ENCODE measurements at regions of chr3 and their contacts with region 1.

Region 1: DNA sequence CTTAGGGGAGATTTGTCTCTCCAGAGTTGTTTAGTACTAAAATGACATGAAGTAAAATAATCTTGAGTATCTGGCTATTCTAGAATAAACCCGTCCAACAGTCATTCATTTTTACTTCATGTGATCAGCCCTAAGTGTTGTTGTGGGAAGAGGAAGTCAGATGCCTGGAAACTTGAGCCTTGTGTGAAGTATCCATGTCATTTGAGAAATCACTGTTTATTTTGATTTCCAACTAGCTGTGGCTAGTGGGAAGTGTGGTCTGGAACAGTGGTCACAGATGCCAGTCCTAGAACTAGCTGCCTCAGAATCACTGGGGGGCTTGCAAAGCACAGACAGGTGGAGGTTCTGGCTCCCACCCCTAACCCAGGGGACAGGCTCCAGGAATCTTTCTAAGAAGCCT is 77.7 kb upstream of the LIMD1 start:
- DNase-seq: no peak
- ATAC-seq: no peak

Region 2: DNA sequence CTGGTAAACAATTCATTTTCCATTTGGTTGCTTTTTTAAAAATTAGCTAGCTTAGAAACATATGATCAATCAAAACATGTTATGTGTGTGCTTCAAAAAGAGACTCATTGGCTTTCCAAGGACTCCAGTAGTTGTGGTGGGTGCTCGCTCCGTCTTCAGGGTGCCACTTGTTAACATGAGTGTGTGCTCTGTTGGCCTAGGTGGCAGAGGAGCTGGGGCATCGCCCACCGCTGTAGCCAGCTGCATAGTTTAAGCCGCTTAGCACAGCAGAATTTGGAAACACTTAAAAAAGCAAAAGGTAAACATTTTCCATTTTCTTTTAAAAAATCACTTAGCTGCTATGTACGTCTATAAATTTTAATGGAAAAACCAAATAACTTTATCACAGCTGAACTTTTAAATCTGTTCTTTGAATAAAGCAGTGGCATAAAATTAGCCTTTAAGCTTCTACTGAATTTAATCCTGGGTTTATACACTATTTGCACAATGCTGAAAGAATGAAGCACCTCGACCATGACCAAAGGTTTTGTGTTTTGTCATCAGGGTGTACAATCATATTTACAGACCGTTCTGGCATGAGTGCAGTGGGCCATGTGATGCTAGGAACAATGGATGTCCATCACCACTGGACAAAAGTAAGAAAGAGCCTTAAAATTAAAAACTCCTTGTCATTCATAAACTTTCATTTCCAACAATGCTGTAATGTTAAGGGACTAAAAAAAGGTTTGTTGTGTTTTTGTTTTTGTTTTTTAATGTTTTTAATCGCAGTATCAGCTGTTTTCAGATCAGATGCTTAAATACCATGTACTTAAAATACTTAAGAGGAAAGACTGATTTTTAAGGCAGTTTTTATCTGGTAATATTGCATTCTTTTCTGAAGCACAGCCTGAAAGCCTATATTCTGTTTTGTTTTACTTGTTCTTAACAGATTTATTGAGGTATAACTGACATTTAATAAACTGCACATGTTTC is 1120.3 kb before region 1 on chr3:
- intact Hi-C with region 1: no loop called
- DNase-seq: no peak
- ATAC-seq: no peak

Region 3: GRCh38 chr3:44976002-44976815 is 540.6 kb before region 1 on chr3 and contains the starts of genes EXOSC7 and ZDHHC3:
- intact Hi-C with region 1: no loop called
- DNase-seq: peak; percentile 91
- ATAC-seq: peak; percentile 97
- total RNA-seq, gene EXOSC7: 36.9 TPM
- total RNA-seq, gene ZDHHC3: 85.1 TPM

Region 4: DNA sequence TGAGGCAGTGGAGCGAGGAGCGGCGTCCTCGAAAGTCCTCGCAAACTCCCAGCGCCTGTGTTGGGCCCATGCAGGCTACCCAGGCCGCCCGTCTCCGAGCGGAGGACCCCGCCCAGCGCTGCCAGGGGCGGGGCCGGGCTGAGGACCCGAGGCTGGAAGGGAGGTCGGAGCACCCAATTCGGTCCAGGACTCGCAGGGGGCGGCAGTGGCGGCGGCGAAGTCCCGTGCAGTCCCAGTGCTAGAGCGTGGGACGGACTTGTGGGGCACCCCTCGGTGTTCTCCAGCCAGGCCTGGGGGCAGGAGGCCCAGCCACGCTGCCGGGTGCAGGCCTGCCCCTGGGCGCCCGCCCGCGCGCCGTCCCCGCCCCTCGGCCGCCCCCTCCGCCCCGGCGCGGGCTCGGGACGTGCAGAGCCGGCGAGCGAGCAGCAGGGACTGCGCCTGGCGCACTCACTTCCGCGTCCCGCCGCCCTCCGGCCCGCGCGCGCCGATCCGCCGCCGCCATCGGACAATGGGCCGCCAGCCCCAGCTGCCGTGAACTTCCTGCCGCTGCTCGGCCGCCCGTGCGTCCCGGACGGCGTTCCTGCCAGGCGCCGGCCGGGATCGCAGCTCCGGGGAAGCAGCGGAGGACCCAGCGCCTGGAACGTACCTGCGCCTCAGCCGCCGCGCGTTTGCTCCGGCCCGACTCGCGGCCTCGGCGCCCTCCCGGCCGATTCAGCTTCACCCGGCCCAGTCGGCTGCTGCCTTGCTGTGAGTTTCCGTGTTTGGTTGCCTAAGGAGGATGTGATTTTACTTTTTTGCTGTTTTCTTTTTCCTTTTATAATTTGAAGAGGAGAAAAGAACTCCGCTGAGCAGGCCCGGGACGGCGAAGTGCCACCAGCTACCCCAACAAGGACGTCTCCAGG is 77.1 kb after region 1 on chr3:
- intact Hi-C with region 1: loop called (anchors 10 kb)
- DNase-seq: peak; percentile 83
- ATAC-seq: peak; percentile 64

Region 5: DNA sequence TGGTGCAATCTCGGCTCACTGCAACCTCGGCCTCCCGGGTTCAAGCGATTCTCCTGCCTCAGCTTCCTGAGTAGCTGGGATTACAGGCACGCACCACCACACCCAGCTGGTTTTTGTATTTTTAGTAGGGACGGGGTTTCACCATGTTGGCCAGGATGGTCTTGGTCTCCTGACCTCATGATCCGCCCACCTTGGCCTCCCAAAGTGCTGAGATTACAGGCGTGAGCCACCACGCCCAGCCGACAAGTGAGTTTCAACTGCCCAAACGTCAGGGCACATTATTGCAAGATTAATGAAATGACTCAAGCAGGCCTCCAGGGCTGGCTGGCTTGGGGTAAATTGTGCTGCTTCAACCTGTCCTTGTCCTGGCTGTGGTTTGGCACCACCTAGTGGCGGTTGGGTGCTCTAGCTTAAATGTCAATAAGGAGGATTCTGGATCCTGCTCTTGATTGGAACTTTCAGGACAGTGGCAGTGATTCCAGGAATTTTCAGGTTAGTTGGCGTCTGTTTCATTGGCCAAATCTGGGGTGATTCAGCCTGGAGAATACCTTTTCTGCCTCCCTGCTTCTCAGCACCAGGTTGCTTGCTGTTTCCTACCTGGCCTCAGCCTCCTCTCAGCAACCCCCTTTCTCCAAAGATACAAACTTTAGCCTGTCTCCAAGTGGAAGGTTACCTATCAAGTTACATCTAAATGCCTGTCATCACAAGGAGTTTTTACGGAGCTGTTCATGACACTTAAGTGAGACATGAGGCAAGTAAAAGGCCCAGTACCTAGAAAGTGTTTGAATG is 139.9 kb after region 1 on chr3:
- intact Hi-C with region 1: loop called (anchors 5 kb)
- DNase-seq: peak; percentile 94
- ATAC-seq: peak; percentile 90

Region 6: DNA sequence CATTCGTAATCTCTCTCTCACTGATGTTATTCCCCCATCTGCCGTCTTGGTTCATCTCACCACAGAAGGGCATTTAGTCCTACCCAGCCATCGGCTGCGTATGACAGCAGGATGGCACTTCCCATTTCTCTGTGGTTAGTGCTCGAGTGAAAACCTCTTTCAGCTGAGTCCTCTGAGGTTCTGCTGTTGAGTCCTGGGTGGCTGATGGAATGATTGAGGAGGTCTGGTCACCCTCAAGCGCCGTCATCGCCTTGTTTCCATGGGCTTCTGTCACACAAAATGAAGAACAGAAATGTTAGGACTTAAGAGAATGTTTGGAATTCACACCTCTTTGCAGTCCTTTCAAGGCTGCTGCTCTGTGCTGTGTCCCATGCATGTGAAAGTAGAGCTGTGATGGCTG is 163.0 kb after region 1 on chr3:
- intact Hi-C with region 1: no loop called
- DNase-seq: no peak
- ATAC-seq: no peak

Measured in sciatic nerve (tissue), 2 donors.